PC-9 (cell line): ENCODE measurements at regions of chr3 and their contacts with region 1.

Region 1: DNA sequence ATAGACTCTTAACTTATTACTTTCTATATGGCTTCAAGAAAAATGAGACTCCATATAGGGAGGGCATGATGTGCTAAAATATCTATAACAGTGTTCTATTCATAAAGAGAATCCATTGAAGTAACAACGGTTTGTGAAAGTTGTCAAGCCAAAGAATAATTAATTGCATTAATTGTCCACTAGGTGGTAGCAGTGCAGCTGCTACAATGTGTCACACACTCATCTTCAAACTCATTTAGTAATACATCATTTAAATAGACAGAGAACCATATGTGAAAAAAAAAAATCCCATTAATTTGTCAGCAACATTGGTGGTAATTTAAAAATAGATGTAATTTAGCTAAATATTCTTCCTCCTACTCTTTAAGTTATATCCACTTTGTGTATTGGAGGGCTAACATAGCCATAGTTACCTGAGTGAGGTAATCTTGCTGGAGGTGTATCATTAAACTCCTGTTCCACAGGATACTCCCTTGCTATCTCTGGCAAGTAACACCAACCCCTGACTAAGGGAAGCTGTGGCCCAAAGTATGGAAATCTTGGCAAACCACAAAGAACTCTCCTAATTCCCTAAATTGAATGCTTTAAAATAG is 3.7 kb upstream of the CPA3 start:
- DNase-seq: no peak
- H3K4me3 ChIP-seq: no peak overlapping the region
- H3K27ac ChIP-seq: no peak overlapping the region
- H3K4me1 ChIP-seq: no peaks in the 10 kb centered on the region
- H3K27me3 ChIP-seq: no peaks in the 10 kb centered on the region
- CTCF ChIP-seq: peak; percentile 78

Region 2: DNA sequence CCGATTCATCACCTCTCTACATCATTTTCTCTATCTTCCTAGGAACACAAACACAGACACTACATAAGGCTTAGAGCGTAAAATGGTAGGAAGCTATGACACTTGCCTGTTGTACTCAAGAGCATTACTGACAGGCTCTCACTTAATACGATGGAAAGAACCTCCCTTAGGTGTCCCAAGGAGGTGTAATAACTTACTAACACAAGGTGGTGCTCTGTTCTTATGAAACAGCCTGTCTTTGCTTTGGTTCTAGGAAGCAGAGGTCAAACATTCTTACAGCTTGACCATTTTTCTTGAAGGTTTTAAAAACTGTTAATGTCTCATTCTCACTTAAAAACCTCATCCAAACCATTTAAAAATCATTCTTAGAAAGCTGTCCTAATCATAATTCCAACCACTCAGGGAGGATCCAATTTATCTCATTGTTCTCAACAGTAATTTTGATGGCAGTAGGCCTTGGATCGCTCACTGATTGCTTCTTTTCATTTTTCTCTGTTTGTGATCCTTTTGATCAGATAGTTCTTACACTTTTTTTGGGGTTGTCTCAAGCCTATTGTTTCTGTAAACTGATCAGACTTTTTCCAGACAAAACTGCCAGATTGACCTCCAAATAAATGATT is 481.5 kb before region 1 on chr3:
- CTCF ChIA-PET with region 1: no interaction called
- POLR2A ChIA-PET with region 1: no interaction called
- intact Hi-C with region 1: loop called (anchors 5 kb)
- DNase-seq: no peak
- H3K4me3 ChIP-seq: no peak overlapping the region
- H3K27ac ChIP-seq: no peak overlapping the region
- H3K4me1 ChIP-seq: no peaks in the 10 kb centered on the region
- H3K27me3 ChIP-seq: no peaks in the 10 kb centered on the region
- CTCF ChIP-seq: peak; percentile 62

Region 3: GRCh38 chr3:148727247-148727646 is 134.1 kb before region 1 on chr3:
- CTCF ChIA-PET with region 1: no interaction called
- POLR2A ChIA-PET with region 1: no interaction called
- intact Hi-C with region 1: loop called (anchors 5 kb)
- DNase-seq: peak in 1 of 2 experiments; percentile 17
- H3K4me3 ChIP-seq: no peak overlapping the region
- H3K27ac ChIP-seq: no peak overlapping the region
- H3K4me1 ChIP-seq: no peaks in the 10 kb centered on the region
- H3K27me3 ChIP-seq: no peaks in the 10 kb centered on the region
- CTCF ChIP-seq: peak; percentile 45

Region 4: GRCh38 chr3:148914936-148915690 is 53.7 kb after region 1 on chr3:
- CTCF ChIA-PET with region 1: no interaction called
- POLR2A ChIA-PET with region 1: no interaction called
- intact Hi-C with region 1: no loop called
- DNase-seq: no peak
- H3K4me3 ChIP-seq: no peak overlapping the region
- H3K27ac ChIP-seq: no peak overlapping the region
- H3K4me1 ChIP-seq: no peaks in the 10 kb centered on the region
- H3K27me3 ChIP-seq: no peaks in the 10 kb centered on the region
- CTCF ChIP-seq: no peak